ENCODE measurements at regions of chr6 and their contacts with region 1.

Region 1: DNA sequence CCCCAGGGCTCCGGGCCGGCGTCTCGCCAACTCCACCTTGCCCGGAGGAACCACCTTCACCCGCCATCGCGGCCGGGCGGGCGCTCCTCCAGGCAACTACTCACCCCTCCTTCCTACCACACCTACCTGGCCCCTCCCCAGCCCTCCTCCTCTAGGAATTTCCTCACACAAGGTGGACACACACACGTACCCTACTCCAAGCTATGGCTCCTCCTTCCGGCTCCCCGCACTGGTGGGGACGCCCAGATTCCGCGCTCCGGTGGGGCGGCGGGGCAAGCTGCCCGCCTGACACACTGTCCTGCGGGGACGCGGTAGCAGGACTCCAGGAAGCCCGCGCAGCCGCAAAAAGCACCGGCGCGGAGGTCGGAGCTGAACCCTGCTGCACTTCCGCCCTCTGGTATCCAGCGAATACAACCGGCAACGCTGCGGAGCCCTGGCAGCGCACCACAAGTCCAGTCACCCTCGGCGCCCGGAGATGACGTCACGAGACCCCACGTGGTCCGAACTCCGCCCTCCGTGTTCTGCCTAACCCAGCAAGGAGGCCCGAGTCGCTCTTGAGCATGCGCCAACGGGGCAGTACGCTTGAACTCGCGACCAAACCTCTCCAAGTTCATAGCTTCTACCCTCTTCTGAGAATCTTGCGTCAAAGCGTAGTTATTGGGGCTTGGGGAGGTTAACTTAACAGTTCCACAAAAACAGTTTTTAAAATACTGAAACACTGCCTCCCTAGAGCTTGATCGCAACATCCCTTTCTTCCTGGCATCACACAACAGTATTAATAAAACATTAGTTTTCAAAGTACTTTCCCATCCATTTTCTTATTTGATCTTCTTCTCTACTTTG is at the start of gene ATG5:
- DNase-seq: peak; percentile 99
- CTCF ChIP-seq: no peak

Region 2: GRCh38 chr6:106339334-106340029 is 13.9 kb after region 1 on chr6:
- CTCF ChIA-PET with region 1: interaction called, 11 read pairs
- POLR2A ChIA-PET with region 1: no interaction called
- DNase-seq: peak; percentile 64
- CTCF ChIP-seq: peak; percentile 54

Measured in GM10248 (cell line).